ENCODE measurements at regions of chrX and their contacts with region 1.

Region 1: GRCh38 chrX:54891573-54891972 is 29.1 kb upstream of the TRO start:
- DNase-seq: peak; percentile 31 to 43 (median 37)
- H3K4me3 ChIP-seq: no peak overlapping the region
- H3K4me3 Mint-ChIP-seq: no peak overlapping the region
- H3K27ac ChIP-seq: no peak overlapping the region
- H3K27ac Mint-ChIP-seq: no peak overlapping the region
- H3K4me1 ChIP-seq: no peaks in the 10 kb centered on the region
- H3K4me1 Mint-ChIP-seq: no peaks in the 10 kb centered on the region
- H3K27me3 ChIP-seq: no peaks in the 10 kb centered on the region
- H3K27me3 Mint-ChIP-seq: peaks cover 2 to 9% of the 10 kb centered on the region in 2 donors

Region 2: DNA sequence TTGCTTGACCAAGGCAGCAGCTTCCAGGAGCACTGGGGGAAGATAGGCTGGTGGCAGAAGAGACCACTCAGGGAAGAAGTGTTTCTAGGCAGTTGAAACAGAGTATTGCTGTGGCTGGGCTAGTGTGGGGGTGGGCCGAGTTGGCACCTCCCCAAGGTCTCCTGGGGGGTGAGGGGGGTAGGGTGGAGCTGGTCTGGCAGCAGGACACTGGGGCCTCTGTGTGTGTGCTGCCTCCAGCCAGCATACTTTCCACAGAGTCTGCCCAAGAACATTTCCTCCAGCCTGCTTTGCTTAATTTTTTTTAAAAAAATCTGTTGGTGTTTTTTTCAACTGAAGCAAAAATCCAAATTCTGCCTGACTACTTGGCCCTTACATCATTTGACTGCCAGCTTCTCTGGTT is 97.5 kb before region 1 on chrX:
- CTCF ChIA-PET with region 1: no interaction called
- POLR2A ChIA-PET with region 1: no interaction called
- intact Hi-C with region 1: no loop called
- DNase-seq: no peak
- H3K4me3 ChIP-seq: no peak overlapping the region
- H3K4me3 Mint-ChIP-seq: no peak overlapping the region
- H3K27ac ChIP-seq: no peak overlapping the region
- H3K27ac Mint-ChIP-seq: no peak overlapping the region
- H3K4me1 ChIP-seq: no peaks in the 10 kb centered on the region
- H3K4me1 Mint-ChIP-seq: no peaks in the 10 kb centered on the region
- H3K27me3 ChIP-seq: no peaks in the 10 kb centered on the region
- H3K27me3 Mint-ChIP-seq: peaks cover 0 to 2% of the 10 kb centered on the region in 2 donors

Region 3: DNA sequence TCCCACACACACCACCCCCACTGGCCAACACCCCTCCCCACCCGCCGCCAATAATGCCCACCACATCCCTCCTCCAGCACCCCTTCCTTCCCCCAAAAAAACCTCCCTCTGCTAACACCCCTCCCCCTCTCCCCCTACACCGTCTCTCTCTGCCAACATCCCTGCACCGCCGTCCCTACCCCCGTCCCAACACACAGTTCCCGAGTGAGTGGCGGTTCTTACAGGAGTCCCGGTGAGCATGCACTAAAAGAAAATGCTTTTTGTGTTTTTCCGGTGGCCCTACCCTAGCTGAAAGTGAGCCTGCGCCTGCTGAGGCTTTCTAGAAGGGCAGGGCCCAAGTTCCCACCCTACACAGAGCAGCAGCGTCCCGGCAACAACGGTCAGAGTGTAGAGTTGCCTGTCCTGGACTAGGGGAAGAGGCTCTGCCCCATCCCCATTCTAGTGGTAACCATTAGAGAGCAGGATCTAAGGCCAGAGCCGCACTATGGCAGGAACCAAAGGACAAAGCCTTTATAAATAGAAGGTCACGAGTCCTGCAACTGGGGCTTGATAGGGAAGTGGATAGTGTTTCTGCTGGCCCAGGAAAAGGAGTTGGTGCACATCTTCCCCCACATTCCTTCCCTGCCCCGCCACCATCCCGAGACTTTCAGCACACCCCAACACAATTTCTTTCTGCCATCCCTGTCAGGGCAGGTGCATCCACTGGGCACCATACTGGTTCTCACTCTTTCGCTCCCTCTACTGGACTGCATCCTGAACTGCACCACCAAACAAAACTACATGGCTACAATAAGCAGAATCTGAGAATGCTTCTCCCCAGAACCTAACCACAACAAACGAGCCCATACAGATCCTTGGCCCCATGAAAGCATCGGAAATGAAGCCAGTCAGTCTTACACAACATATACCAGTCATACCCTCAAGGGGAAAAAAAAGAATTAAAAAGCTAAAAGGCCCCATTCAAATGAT is 451.2 kb after region 1 on chrX:
- CTCF ChIA-PET with region 1: no interaction called
- POLR2A ChIA-PET with region 1: no interaction called
- intact Hi-C with region 1: loop called (anchors 2 kb)
- DNase-seq: peak; percentile 54 to 68 (median 62)
- H3K4me3 ChIP-seq: no peak overlapping the region
- H3K4me3 Mint-ChIP-seq: peak overlapping the region in 2 of 8 donors; percentile 57 to 63
- H3K27ac ChIP-seq: no peak overlapping the region
- H3K27ac Mint-ChIP-seq: peak overlapping the region in 2 of 7 donors; percentile 2 to 20
- H3K4me1 ChIP-seq: peaks cover 6% of the 10 kb centered on the region
- H3K4me1 Mint-ChIP-seq: peaks cover 7 to 17% (median 12%) of the 10 kb centered on the region in 4 donors
- H3K27me3 ChIP-seq: no peaks in the 10 kb centered on the region
- H3K27me3 Mint-ChIP-seq: no peaks in the 10 kb centered on the region